ENCODE measurements at regions of chr10 and their contacts with region 1.

Region 1: GRCh38 chr10:12129222-12130111 is at the start of gene SEC61A2:
- DNase-seq: peak; percentile 84 to 99 (median 92)
- ATAC-seq: peak; percentile 89 to 95 (median 93)
- H3K4me3 ChIP-seq: peak within 1 kb of the TSS; percentile 68 to 78
- H3K4me3 Mint-ChIP-seq: peak within 1 kb of the TSS; percentile 84 to 90 (median 85)
- H3K27ac ChIP-seq: peak within 1 kb of the TSS; percentile 79
- H3K27ac Mint-ChIP-seq: peak within 1 kb of the TSS; percentile 80 to 84
- H3K4me1 ChIP-seq: peaks cover 5 to 18% of the 10 kb centered on the region in 2 experiments
- H3K4me1 Mint-ChIP-seq: peaks cover 20 to 27% (median 22%) of the 10 kb centered on the region in 3 donors
- H3K27me3 ChIP-seq: no peaks in the 10 kb centered on the region
- H3K27me3 Mint-ChIP-seq: no peaks in the 10 kb centered on the region
- total RNA-seq, gene SEC61A2: 11.1 to 20.0 (median 13.9) TPM

Region 2: GRCh38 chr10:11958956-11959355 is 170.5 kb before region 1 on chr10:
- CTCF ChIA-PET with region 1: no interaction called
- POLR2A ChIA-PET with region 1: interaction called in 1 of 2 experiments, 13 read pairs
- DNase-seq: no peak
- ATAC-seq: no peak
- H3K4me3 ChIP-seq: no peak overlapping the region
- H3K4me3 Mint-ChIP-seq: no peak overlapping the region
- H3K27ac ChIP-seq: no peak overlapping the region
- H3K27ac Mint-ChIP-seq: no peak overlapping the region
- H3K4me1 ChIP-seq: no peaks in the 10 kb centered on the region
- H3K4me1 Mint-ChIP-seq: no peaks in the 10 kb centered on the region
- H3K27me3 ChIP-seq: no peaks in the 10 kb centered on the region
- H3K27me3 Mint-ChIP-seq: no peaks in the 10 kb centered on the region

Region 3: DNA sequence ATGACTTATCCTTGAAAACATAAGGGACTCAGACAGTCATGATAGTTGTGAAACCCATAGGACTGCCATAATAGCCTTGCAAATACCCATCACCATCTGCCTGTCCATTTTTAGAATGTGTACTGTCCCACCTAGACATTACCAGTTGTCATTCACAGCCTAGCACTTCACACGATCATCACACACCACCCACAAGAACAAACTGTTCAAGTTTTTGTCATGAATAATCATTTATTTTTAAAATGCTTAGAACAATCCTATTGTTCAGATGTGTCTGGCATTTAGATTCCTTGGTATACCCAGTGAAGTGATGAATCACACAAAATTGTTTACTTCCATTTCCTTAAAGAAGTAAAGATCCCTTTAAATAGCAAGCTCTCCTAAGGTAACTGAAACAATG is 825.4 kb after region 1 on chr10:
- CTCF ChIA-PET with region 1: no interaction called
- POLR2A ChIA-PET with region 1: no interaction called
- DNase-seq: no peak
- ATAC-seq: no peak
- H3K4me3 ChIP-seq: no peak overlapping the region
- H3K4me3 Mint-ChIP-seq: no peak overlapping the region
- H3K27ac ChIP-seq: no peak overlapping the region
- H3K27ac Mint-ChIP-seq: no peak overlapping the region
- H3K4me1 ChIP-seq: no peaks in the 10 kb centered on the region
- H3K4me1 Mint-ChIP-seq: no peaks in the 10 kb centered on the region
- H3K27me3 ChIP-seq: peaks cover 0 to 14% of the 10 kb centered on the region in 2 experiments
- H3K27me3 Mint-ChIP-seq: peaks cover 1 to 7% of the 10 kb centered on the region in 2 donors

Measured in T-cell (primary cell).